Left colon (tissue), 2 donors: ENCODE measurements at regions of chr16 and their contacts with region 1.

Region 1: DNA sequence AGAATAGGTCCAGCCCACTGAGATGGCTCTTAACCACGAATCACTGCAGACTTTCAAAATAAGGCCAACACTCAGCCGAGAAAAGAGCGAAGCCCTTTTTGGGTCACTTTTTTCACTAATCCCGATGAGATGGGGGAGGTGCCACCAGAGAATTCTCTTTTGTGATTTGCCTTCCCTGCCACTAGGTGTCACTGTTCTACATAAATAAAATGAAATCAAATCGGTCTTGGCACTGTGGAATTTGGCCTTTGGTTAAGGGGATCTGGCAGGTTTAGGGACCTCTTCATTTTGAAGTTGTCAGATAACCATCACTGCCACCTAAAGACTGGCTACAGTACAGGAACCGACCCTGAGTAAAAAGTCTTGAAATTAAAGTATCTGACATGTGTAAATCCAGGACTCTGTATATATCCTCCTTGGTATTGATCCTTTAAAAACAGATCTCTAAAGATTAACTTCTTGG is 147.0 kb downstream of the HS3ST4 start:
- DNase-seq: peak in 1 of 2 donors; percentile 5
- ATAC-seq: peak; percentile 53

Region 2: GRCh38 chr16:25796239-25796638 is 42.5 kb before region 1 on chr16:
- intact Hi-C with region 1: no loop called
- DNase-seq: no peak
- ATAC-seq: no peak

Region 3: DNA sequence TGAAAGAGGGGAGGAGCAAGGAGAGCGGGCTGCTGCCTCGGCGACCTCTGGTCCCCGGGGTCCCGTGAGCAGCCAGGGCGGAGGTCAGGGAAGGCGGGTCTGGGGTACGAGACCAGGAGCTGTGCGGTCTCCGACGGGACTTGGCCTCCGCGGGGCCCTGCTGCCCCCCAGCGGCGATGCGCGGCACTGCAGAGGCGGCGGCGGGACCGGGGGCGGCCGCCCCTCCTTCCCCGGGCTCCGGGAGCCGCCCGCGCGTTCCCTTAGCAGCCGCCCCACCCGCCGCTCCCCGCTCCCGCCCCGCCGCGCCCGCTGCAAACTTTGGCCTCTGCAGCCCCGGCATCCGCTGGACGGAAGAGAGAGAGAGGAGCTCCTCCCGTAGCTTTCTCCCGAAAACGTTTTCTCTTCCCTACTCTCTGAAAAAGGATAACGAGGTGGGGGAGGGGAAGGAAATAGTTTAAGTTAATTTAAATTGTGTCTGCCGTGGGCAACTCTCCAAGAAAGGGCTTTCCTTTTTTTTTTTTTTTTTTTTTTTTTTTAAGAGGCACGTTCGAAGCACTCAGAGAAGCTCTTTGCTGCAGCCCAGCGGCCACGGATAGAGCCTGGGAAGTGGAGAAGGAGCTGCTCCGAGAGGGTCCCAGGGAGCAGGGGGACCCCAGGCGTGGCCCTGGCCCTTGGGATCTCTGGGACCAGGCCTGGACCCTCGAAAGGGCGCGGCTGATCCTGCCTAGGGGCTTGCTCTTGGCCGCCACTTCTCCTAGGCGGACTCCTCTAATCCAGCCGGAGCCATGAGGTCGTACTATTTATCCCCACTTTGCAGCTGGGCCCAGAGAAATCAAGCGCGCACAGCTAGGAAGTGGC is 1271.1 kb after region 1 on chr16:
- intact Hi-C with region 1: loop called in 1 of 2 experiments (anchors 10 kb)
- DNase-seq: peak; percentile 83 to 90
- ATAC-seq: peak; percentile 95